WTC11 (cell line): ENCODE measurements at regions of chr6 and their contacts with region 1.

Region 1: GRCh38 chr6:47631269-47631772 is 67.1 kb upstream of the ADGRF4 start:
- DNase-seq: no peak
- ATAC-seq: peak; percentile 63
- H3K4me3 Mint-ChIP-seq: no peak overlapping the region
- H3K27ac Mint-ChIP-seq: no peak overlapping the region
- H3K4me1 Mint-ChIP-seq: peaks cover 29% of the 10 kb centered on the region
- H3K27me3 Mint-ChIP-seq: no peaks in the 10 kb centered on the region
- CTCF ChIP-seq: peak; percentile 41; the same call in 1 of the 2 replicates

Region 2: DNA sequence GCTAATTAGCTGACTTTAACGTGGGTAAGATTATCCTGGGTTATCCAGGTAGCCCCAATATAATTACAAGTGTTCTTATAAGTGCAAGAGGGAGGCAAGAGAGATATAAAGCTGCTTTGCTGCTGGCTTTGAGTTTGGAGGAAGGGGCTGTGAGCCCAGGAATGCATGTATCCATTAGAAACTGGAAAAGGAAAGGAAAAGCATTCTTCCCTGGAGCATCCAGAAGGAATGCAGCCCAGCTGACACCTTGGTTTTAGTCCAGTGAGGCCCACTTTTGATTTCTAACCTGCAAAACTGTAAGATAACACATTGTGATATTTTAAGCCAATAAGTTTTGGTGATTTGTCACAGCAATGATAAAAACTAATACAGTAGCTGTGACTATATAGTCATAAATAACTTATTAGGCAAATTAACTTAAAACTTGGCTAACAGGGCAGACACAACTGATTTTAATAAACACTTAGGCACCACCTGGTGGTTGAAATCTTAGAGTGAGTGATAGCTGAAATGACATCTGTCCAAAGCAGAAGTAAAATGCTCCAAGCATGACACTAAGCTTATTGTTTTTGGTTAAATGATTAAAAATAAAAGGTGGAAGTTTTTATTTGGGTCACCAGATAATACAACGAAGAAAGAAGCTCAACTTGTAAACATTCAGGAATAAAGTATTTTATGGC is 102.7 kb after region 1 on chr6:
- CTCF ChIA-PET with region 1: interaction called, 31 read pairs
- POLR2A ChIA-PET with region 1: no interaction called
- DNase-seq: no peak
- ATAC-seq: peak; percentile 56
- H3K4me3 Mint-ChIP-seq: no peak overlapping the region
- H3K27ac Mint-ChIP-seq: peak overlapping the region; percentile 48; the same call in 1 of the 2 replicates
- H3K4me1 Mint-ChIP-seq: peaks cover 45% of the 10 kb centered on the region
- H3K27me3 Mint-ChIP-seq: no peaks in the 10 kb centered on the region
- CTCF ChIP-seq: no peak

Region 3: DNA sequence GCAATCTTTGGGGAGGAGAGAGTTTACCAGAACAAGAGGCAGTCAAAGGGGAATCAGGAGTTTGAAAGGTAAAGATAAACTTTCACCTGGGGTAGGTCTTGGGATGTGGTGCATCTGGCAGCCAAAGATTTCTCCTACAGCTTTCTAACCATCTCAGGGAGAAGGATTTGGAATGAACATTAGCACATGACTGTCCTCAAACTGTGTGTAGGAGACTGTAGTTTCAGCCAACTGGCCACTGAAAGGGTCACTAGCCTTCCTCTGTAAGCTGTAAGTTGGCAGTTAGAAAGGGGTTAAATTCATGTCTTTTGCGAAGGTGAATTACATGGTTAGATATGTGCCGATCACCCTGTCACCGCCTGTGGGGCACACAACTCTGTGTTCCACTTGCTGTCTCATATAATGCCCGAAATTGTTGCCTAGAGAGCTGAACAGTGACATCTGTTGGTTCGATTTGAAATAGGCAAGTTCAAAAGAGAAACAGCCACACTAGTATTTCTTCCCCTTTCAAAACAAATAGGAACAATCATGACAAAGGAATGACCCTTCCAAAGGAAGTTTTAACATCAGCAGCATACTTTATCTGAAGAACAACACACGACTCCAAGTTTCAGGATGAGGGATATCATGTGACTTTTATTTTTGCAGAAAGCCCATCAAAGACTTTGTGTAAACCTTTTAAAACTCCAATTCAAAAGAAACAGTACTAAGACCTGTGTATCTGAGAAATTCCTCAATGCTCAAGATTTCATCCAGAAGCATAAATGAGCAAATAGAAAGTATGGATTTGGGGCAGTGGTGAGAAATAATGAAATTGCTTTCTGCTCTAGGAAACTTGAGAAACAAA is 149.4 kb after region 1 on chr6:
- CTCF ChIA-PET with region 1: interaction called, 40 read pairs
- POLR2A ChIA-PET with region 1: interaction called, 4 read pairs
- DNase-seq: no peak
- ATAC-seq: peak; percentile 96
- H3K4me3 Mint-ChIP-seq: no peak overlapping the region
- H3K27ac Mint-ChIP-seq: no peak overlapping the region
- H3K4me1 Mint-ChIP-seq: peaks cover 13% of the 10 kb centered on the region
- H3K27me3 Mint-ChIP-seq: peaks cover 11% of the 10 kb centered on the region
- CTCF ChIP-seq: no peak